K562 (cell line): ENCODE measurements at regions of chr13 and their contacts with region 1.

Region 1: DNA sequence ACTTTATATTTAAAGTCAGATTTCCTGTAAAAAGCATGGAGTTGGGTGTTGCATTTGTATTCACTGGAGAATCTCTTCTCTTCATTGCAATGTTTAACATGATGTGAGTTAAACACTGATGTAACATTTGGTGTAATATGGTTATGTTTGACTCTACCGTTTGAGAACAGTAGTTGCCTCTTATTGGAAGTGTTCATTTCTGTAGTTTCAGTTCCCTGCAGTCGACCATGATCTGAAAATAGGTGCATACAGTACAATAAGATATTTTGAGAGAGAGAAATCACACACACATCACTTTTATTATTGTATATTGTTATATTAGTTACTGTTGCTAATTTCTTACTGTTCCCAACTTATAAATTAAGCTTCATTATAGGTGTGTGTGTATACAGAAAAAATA is 105.2 kb upstream of the SPACA7 start:
- DNase-seq: no peak
- ATAC-seq: no peak
- H3K4me3 ChIP-seq: no peak overlapping the region
- H3K27ac ChIP-seq: no peak overlapping the region
- H3K4me1 ChIP-seq: no peaks in the 10 kb centered on the region
- H3K27me3 ChIP-seq: peaks cover 0 to 7% of the 10 kb centered on the region in 2 experiments; a peak in 1 of 5 replicates
- CTCF ChIP-seq: no peak
- EP300 ChIP-seq: no peak
- POLR2A ChIP-seq: no peak
- RAD21 ChIP-seq: no peak

Region 2: DNA sequence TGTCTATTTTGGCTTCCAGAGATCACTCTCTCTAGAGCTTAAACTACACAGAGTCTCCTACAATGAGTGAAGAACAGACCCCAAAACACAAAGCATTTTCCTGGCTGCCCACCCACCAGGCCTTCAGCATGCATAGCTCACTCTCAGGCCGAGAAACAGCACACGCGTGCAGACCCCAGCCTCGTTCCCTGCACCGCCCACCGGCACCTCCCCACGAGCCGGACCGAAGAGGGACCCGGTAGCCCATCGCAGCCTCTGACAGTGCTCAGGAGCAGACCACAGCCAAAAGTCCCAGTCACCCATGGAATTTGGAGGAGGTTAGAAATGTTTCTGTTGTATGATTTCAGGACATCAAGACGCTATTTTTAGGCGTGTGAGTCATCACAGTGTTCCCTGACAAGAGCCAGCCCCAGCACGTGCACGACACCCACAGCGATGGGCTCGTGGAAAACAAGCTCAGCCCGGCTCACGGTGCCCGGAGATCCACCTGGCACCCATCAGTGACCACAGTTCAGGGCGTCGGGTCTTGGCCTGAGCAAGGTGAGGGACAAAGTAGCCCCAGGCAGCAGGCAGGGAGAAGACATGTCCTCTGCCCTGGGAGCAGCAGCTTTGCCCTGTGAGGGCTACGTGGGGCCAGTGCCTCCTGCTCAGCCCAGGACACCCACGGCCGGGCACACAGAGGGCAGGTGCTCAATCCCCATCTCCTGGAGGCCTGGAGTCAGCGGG is 55.1 kb after region 1 on chr13:
- CTCF ChIA-PET with region 1: no interaction called
- POLR2A ChIA-PET with region 1: no interaction called
- in situ Hi-C with region 1: loop called (anchors 10 kb)
- intact Hi-C with region 1: no loop called
- DNase-seq: peak in 1 of 4 experiments; percentile 5
- ATAC-seq: no peak
- H3K4me3 ChIP-seq: no peak overlapping the region
- H3K27ac ChIP-seq: no peak overlapping the region
- H3K4me1 ChIP-seq: peaks cover 0 to 4% of the 10 kb centered on the region in 2 experiments; a peak in 1 of 5 replicates
- H3K27me3 ChIP-seq: peaks cover 5 to 44% of the 10 kb centered on the region in 2 experiments; a peak in 3 of 5 replicates
- CTCF ChIP-seq: no peak
- EP300 ChIP-seq: no peak
- POLR2A ChIP-seq: no peak
- RAD21 ChIP-seq: no peak